ENCODE measurements at regions of chr5 and their contacts with region 1.

Region 1: DNA sequence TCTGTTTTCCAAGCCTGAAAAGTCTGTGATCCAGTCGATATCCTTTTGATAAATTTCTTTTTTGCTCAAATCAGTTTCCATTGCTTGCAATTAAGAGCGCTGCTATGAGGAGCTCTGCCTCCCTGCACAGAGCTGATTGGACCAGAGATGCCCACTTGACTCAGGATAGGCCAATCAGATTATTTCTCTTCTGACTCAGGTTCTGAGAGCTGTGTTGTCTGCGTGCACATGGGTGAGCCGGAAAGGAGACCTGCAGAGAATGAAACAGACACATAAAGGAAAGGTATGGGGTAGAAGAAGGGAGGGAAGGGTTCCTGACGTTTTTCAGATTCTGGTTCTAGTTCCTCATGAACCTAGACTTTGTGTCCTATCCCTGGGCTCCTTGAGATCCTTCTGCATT is 15.8 kb upstream of the FABP6 start:
- DNase-seq: no peak

Region 2: GRCh38 chr5:160105686-160106360 is 107.7 kb before region 1 on chr5:
- intact Hi-C with region 1: no loop called
- DNase-seq: no peak

Region 3: DNA sequence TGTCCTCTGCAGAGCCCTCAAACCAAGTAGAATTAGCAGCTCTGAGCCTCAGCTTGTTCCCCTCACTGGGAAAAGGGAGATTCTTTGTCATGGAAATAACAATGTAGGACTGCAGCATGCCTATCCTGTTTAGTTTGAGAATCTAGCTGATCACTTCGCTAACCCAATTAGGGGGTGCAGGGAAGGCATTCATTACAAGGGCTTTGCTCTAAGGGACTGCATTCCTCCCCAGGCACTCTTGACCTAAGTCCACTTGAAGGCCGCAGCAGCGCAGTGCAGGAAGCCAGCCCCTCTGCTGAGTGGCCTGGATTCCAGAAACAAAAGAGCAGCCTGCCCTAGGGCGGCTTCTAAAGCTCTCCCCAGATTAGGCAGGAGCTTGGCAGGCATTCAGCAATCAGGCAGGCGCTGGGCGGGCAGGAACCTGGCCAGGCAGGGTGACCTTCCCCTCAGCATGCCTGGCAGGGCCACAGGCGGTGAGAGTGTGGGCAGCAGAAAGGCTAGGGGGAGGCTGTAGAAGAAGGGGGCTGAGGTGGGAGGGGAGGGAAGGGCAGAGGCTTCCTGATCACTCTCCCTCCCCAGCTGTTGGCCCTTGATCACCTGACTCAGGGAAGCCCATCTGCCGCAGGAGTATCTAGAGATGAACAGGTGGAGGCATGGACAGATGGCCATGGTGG is 74.0 kb after region 1 on chr5:
- intact Hi-C with region 1: loop called in 1 of 2 experiments (anchors 10 kb)
- DNase-seq: peak; percentile 83

Region 4: DNA sequence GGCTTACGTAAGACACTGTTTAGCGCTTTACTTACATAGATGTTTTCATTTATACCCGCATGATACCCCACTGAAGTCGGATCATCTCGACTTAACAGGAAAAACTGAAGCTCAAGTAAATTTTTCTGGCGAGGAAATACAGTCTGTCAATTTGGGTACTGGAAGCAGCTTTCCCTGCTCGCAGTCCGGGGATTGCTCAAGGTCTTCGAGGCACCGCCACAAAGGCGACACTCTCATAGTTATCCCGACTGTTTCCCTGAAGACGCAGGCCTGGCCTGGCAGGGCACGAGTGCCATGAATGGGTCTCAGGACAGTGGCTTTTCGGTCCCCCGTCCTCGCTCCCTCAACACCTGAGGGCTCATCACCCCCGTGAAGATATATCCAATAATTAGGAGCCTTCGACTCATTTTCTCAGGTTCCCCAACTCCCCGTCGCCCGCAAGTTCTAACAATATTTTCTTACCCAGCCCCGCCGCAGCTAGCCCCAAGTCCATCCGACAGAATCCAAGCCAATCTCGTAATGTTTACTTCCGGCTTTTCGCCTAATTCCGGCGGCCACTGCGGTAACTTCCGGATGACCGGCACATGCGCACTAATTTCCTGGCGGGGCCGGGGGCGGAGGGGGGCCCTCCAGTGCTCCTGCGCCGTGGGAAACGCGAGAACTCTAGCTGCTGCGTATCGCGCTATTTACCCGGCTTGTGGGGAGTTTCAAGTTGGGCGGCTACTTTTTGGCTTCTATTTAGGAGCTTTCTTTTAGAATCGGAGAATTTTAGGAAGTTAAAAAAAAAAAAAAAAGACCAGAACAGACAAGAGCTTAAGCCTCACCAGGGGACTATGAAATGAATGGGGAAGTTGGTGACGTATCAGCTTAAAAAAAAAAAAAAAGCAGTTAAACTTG is 205.3 kb after region 1 on chr5 and contains the start of gene SLU7:
- intact Hi-C with region 1: no loop called
- DNase-seq: peak; percentile 98
- total RNA-seq, gene SLU7: 35.8 to 47.5 TPM